Activated T-helper 1 cell treated with anti-CD3 and anti-CD28 coated beads, Interleukin-12 subunit alpha, Interleukin-12 subunit beta, Interleukin-2, Interleukin-4 antibody, amounts not matched to agents 30 ng/mL and 10 ng/mL and 1 ng/mL, durations not matched to agents 14 hours and 24 hours and 36 hours (primary cell): ENCODE measurements at regions of chr20 and their contacts with region 1.

Region 1: GRCh38 chr20:38893565-38894090 is 32.6 kb upstream of the FAM83D start:
- DNase-seq: peak; percentile 71
- H3K4me3 Mint-ChIP-seq: no peak overlapping the region
- H3K27ac Mint-ChIP-seq: peak overlapping the region; percentile 91
- H3K4me1 Mint-ChIP-seq: peaks cover 62% of the 10 kb centered on the region
- H3K27me3 Mint-ChIP-seq: no peaks in the 10 kb centered on the region

Region 2: GRCh38 chr20:38730989-38731737 is 162.5 kb before region 1 on chr20:
- intact Hi-C with region 1: loop called (anchors 1 kb)
- DNase-seq: peak; percentile 57
- H3K4me3 Mint-ChIP-seq: peak overlapping the region; percentile 61
- H3K27ac Mint-ChIP-seq: peak overlapping the region; percentile 76
- H3K4me1 Mint-ChIP-seq: peaks cover 48% of the 10 kb centered on the region
- H3K27me3 Mint-ChIP-seq: peaks cover 85% of the 10 kb centered on the region

Region 3: DNA sequence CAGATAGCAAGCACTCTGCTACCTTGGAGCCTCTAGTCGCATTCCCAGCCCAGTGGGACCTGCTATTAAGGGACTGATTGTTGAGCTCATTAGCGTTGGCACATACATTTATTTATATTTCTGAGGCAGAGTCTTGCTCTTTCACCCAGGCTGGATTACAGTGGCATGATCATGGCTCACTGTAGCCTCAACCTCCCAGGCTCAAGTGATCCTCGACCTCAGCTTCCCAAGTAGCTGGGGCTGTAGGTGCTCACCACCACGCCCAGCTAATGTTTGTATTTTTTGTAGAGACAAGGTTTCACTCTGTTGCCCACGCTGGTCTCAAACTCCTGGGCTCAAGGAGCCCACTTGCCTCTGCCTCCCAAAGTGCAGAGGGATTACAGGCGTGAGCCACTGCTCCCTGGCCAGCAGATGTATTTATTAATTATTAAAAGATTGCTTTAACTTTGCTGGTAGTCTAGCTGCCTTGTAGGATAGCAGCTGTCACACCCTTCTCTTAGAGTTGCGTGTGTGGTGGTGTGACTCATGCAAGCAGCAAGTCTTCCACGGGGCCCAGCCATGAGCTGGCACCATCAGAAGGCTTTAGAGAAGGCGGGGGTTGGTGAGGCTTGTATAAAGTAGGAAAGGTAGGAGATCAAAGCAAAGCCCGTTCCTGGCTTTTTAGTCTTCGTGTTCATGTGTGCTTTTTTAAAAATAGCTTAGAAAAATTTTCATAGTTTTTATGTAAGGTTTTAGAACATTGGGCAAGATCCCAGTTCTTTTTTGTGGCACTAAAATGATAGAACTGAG is 128.9 kb before region 1 on chr20:
- intact Hi-C with region 1: loop called (anchors 1 kb)
- DNase-seq: peak; percentile 19
- H3K4me3 Mint-ChIP-seq: peak overlapping the region; percentile 40
- H3K27ac Mint-ChIP-seq: peak overlapping the region; percentile 84
- H3K4me1 Mint-ChIP-seq: peaks cover 45% of the 10 kb centered on the region
- H3K27me3 Mint-ChIP-seq: no peaks in the 10 kb centered on the region

Region 4: GRCh38 chr20:38805502-38805957 is 88.1 kb before region 1 on chr20 and contains the start of gene PPP1R16B:
- intact Hi-C with region 1: loop called (anchors 1 kb)
- DNase-seq: peak; percentile 79
- H3K4me3 Mint-ChIP-seq: peak within 1 kb of the TSS; percentile 90
- H3K27ac Mint-ChIP-seq: peak within 1 kb of the TSS; percentile 96
- H3K4me1 Mint-ChIP-seq: peaks cover 64% of the 10 kb centered on the region
- H3K27me3 Mint-ChIP-seq: no peaks in the 10 kb centered on the region
- total RNA-seq, gene PPP1R16B: 139 and 143 TPM in 2 replicates

Region 5: GRCh38 chr20:38842558-38842981 is 51.1 kb before region 1 on chr20:
- intact Hi-C with region 1: loop called (anchors 2 kb)
- DNase-seq: no peak
- H3K4me3 Mint-ChIP-seq: peak overlapping the region; percentile 78
- H3K27ac Mint-ChIP-seq: peak overlapping the region; percentile 97
- H3K4me1 Mint-ChIP-seq: peaks cover 82% of the 10 kb centered on the region
- H3K27me3 Mint-ChIP-seq: no peaks in the 10 kb centered on the region

Region 6: GRCh38 chr20:38875175-38875993 is 18.2 kb before region 1 on chr20:
- intact Hi-C with region 1: loop called (anchors 2 kb)
- DNase-seq: peak; percentile 68
- H3K4me3 Mint-ChIP-seq: peak overlapping the region; percentile 66
- H3K27ac Mint-ChIP-seq: peak overlapping the region; percentile 96
- H3K4me1 Mint-ChIP-seq: peaks cover 95% of the 10 kb centered on the region
- H3K27me3 Mint-ChIP-seq: no peaks in the 10 kb centered on the region